ENCODE measurements at regions of chr3 and their contacts with region 1.

Region 1: GRCh38 chr3:68876112-68876713 is 56.1 kb downstream of the TAFA4 start:
- DNase-seq: no peak
- H3K4me3 ChIP-seq: no peak overlapping the region
- CTCF ChIP-seq: peak in 1 of 3 donors; percentile 61
- POLR2A ChIP-seq: no peak

Region 2: DNA sequence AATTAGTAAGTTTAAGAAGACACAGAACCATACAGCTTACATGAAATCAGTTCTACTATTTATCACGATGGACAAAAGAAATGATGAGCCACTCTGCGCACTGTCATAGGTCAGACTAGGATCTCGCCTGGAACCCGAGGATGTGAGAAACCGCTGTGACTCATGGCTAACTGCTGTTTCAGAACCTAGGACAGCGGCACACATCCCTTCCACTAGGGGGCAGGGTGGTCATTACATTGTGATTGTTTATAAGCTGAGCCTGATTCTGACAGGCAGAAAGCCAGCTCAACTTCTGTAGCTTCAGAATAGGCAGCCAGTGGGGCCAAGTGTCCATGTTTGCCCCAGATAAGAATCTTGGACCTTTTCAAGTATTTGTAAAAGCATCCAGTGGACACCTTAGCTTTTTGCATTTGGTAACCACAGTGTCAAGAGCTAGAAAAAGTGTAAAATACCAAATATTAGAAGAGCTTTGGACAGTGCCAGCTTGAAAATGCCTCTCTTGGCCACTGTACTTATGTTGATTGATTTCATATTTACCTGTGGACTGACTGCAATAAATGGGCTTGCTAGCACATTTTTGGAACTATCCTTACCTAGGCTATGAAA is 1762.3 kb before region 1 on chr3:
- intact Hi-C with region 1: loop called (anchors 10 kb)
- DNase-seq: peak; percentile 54 to 87
- H3K4me3 ChIP-seq: no peak overlapping the region
- CTCF ChIP-seq: no peak
- POLR2A ChIP-seq: no peak

Measured in lower leg skin (tissue), 4 donors.